ENCODE measurements at regions of chr5 and their contacts with region 1.

Region 1: GRCh38 chr5:178259623-178260536 is 27.3 kb upstream of the PHYKPL start:
- DNase-seq: no peak
- ATAC-seq: no peak

Region 2: DNA sequence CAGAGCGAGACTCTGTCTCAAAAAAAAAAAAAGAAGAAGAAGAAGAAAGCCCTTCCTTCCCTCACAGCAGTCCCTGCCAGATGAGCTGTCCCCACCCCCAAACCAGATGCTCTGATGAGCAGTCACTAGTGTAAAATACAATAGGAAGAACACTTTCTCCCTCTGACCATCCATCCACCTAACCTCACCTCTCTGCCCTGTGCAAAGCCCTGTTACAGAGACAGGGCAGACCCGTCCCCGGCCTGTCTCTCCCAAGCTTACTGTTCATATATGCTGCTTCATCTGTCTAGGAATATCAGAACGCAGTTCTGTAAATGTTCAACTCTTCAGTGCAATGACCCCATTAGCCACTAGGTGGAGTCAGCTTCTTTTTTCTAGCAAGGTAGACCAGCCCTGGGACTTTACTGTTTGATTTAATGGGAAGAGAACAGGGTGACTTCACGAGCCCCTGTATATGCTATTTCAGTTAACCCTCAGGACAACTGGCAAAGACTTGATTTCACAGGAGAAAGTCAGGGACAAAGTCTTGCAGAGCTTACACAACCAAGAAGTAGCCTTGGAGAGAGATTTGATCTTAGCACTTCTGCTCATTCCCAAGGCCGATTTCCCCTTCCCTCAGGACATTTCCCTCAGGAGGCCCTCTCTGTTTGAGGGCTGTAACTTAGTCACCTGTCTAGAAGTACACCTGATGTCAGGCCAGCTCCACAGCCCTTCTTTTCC is 1188.1 kb before region 1 on chr5:
- intact Hi-C with region 1: no loop called
- DNase-seq: peak; percentile 79
- ATAC-seq: peak; percentile 83

Region 3: DNA sequence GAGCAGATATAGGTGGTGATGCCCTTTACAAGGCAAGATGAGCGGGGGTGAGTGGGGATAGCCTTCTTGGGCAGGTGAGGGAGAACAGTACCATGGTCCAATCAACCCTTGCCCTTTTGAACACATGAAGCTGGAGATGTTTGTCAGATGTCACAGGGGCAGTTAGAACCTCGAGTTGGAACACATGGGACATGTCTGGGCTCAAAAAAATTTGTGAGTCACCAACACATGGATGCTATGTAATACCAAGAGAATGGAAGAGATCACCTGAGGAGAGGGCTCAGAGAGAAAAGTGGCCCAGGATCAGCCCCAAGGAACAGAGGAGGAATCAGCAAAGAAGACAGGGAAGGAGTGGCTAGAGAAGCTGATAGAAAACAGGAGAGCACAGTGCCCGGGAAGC is 32.0 kb before region 1 on chr5:
- intact Hi-C with region 1: loop called (anchors 1 kb)
- DNase-seq: no peak
- ATAC-seq: no peak

Region 4: GRCh38 chr5:178398901-178399738 is 139.2 kb after region 1 on chr5:
- intact Hi-C with region 1: no loop called
- DNase-seq: no peak
- ATAC-seq: no peak

Region 5: GRCh38 chr5:178461004-178461730 is 201.3 kb after region 1 on chr5:
- intact Hi-C with region 1: no loop called
- DNase-seq: peak; percentile 86
- ATAC-seq: peak; percentile 90

Measured in sciatic nerve (tissue), 2 donors.